Mammary epithelial cell (primary cell): ENCODE measurements at regions of chr3 and their contacts with region 1.

Region 1: DNA sequence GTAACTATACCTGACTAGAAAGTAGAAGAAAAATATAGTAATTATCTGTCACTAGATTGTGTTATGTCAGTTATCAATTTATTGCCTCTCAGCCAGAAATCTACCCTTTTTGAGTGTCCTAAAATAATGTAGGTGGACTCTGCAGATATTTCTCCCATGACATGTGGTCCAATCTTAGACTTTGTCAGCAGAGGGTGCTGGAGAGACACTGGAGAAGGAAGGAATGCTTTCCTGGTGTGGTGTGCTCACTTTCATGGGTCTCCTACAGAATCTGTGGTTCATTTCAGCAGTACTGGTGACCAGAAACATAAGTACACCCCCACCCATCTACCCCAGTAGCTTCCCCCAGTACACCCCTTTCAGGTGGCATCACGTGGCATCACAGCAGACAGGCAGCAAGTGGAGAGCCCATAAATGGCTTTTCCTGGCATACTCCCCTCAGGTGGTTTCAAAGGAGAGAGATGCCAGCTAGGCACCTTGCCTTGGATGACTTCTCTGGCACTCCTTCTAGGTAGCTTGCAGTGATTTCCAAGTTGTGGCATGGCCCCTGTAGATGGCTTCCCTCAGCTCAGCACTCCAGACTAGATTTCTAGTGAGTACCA is 114.7 kb downstream of the GADL1 start:
- DNase-seq: peak; percentile 25
- H3K4me3 ChIP-seq: no peak overlapping the region
- H3K27ac ChIP-seq: no peak overlapping the region
- H3K4me1 ChIP-seq: no peaks in the 10 kb centered on the region
- H3K27me3 ChIP-seq: peaks cover 5% of the 10 kb centered on the region
- CTCF ChIP-seq: peak; percentile 51 to 60

Region 2: DNA sequence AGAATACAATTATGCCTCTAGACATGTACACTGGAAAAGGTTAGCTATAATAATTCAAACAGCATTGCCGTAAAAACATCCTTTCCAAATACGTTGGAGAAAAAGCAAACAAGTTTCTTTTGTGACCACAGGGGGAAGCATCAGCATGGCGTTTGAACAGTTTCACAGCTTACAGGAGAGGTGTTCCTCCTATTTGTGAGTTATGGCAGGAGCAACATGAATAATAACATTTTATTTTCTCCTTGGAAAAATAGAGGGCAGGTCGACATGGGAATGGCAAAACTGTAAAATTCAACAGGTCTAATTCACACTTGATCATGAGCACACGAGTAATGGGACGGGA is 154.4 kb after region 1 on chr3:
- CTCF ChIA-PET with region 1: no interaction called
- dilution Hi-C with region 1: no loop called
- in situ Hi-C with region 1: no loop called
- intact Hi-C with region 1: loop called (anchors 10 kb)
- DNase-seq: peak; percentile 27
- H3K4me3 ChIP-seq: no peak overlapping the region
- H3K27ac ChIP-seq: no peak overlapping the region
- H3K4me1 ChIP-seq: no peaks in the 10 kb centered on the region
- H3K27me3 ChIP-seq: no peaks in the 10 kb centered on the region
- CTCF ChIP-seq: peak; percentile 69 to 70